ENCODE measurements at regions of chr12 and their contacts with region 1.

Region 1: DNA sequence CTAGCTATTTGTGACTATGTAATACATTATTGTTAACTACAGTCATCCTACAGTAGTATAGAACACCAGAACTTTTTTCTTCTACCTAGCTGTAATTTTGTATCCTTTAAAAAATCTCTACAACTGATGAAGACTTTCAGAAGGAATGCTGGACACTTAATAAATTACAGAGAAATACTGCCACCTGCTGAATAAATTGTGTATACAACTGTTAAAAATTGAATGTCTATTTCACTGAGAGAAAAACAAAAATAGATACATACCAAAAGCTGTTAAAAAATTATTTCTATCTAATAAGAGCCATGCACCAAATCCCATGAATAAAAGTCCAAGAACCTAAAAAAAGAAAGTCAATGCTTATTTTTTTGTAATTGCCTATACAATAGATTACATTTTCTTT is 6.6 kb downstream of the TSPAN19 start:
- DNase-seq: no peak
- H3K4me3 ChIP-seq: no peak overlapping the region
- H3K27ac ChIP-seq: no peak overlapping the region
- H3K4me1 ChIP-seq: no peaks in the 10 kb centered on the region
- H3K27me3 ChIP-seq: peaks cover 4% of the 10 kb centered on the region
- CTCF ChIP-seq: peak; percentile 37 to 63 (median 58)
- POLR2A ChIP-seq: no peak

Region 2: GRCh38 chr12:84874125-84874824 is 155.2 kb before region 1 on chr12:
- intact Hi-C with region 1: loop called (anchors 2 to 5 kb)
- DNase-seq: no peak
- H3K4me3 ChIP-seq: no peak overlapping the region
- H3K27ac ChIP-seq: no peak overlapping the region
- H3K4me1 ChIP-seq: no peaks in the 10 kb centered on the region
- H3K27me3 ChIP-seq: no peaks in the 10 kb centered on the region
- CTCF ChIP-seq: peak; percentile 67 to 85 (median 76)
- POLR2A ChIP-seq: no peak

Measured in adrenal gland (tissue), 19 donors.